Endothelial cell of umbilical vein (primary cell): ENCODE measurements at regions of chr2 and their contacts with region 1.

Region 1: DNA sequence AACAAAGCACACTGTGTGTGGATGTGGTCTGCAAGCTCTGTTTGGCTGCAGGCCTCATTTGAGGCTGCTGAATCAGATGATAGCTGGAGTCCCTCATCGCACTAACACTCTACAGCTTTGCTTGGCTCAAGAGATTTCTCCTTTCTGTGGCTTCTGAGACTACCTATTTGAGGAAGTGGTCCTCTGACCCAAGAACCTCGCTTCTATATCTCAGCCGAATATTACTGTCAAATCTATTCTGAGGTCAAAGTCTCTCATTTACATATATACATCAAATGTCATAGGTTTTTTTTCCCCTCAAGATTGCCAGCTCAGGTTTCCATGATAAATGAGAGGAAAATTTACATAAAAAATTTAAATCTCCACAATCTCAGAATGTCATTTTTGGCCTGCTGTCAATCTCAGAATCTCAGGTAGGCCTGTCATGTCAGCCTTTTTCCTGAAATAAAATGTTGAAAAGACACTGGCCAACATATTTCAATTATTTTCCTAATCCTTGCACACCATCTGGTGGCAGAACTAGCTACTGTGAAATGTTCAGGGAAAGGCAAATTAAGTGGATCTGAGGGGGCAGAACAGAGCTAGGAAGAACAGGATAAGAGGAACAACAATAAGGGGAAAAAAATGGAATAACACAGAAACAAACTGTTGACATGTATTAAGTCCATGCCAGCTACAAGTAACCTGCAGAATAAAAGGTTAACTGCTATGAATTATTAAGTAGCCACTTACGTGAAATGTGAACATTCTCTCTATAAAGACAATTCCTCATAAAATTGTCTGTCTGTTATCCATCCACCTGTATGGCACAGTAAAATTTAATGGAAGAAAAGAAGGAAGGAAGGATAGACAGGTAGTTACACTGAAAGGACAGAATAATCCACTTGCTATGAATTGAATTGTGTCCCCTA is 39.3 kb downstream of the AP1S3 start:
- DNase-seq: peak; percentile 73
- H3K4me3 ChIP-seq: no peak overlapping the region
- H3K27ac ChIP-seq: no peak overlapping the region
- H3K4me1 ChIP-seq: peaks cover 4% of the 10 kb centered on the region
- H3K27me3 ChIP-seq: no peaks in the 10 kb centered on the region
- CTCF ChIP-seq: peak; percentile 46 to 47
- POLR2A ChIP-seq: no peak

Region 2: DNA sequence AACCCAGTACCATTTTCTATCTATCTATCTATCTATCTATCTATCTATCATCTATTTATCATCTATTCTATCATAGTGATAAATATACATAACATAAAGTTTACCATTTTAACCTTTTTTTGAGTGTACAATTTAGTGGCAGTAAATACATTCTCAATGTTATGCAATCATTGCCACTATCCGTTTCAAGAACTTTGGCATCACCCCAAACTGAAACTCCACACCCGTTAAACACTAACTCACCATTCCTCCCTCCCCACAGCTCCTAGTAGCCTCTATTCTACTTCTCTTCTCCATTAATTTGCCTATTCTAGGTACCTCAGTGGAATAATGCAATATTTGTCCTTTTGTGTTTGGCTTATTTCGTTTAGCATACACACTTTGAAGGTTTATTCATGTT is 828.6 kb before region 1 on chr2:
- CTCF ChIA-PET with region 1: interaction called, 58 read pairs
- POLR2A ChIA-PET with region 1: no interaction called
- dilution Hi-C with region 1: no loop called
- intact Hi-C with region 1: loop called (anchors 1 kb)
- DNase-seq: no peak
- H3K4me3 ChIP-seq: no peak overlapping the region
- H3K27ac ChIP-seq: no peak overlapping the region
- H3K4me1 ChIP-seq: no peaks in the 10 kb centered on the region
- H3K27me3 ChIP-seq: peaks cover 0 to 10% of the 10 kb centered on the region in 2 experiments
- CTCF ChIP-seq: no peak
- POLR2A ChIP-seq: no peak

Region 3: DNA sequence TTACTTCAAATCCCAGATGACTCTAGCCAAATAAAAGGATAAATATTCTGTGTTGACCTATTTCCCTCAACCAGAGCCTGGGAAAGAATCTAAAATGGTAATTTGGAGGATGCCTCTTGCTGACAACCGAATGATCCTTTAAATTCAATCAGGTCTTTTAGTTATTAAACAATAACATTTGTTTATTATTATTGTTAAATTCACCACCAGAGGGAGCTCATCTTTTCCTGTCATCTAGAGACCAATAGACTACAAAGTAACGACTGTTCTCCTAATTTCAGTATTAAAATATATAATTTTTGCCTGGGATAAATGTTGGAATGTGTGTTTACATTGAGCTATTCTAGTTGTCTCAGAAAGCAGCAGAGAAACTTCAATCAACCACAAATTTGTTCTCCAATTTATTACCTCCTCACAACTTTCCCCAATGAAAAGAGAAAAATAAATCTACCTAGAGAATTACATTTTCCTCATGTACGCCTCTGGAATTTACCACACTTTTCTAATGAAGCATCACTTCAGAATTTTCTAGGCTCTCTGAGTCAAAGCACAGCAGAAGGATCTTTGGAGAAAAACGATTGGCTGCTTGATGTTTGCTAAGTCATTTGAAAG is 338.6 kb before region 1 on chr2:
- CTCF ChIA-PET with region 1: interaction called, 70 read pairs
- POLR2A ChIA-PET with region 1: no interaction called
- dilution Hi-C with region 1: no loop called
- intact Hi-C with region 1: loop called (anchors 1 kb)
- DNase-seq: peak; percentile 26
- H3K4me3 ChIP-seq: no peak overlapping the region
- H3K27ac ChIP-seq: no peak overlapping the region
- H3K4me1 ChIP-seq: peaks cover 6% of the 10 kb centered on the region
- H3K27me3 ChIP-seq: no peaks in the 10 kb centered on the region
- CTCF ChIP-seq: peak; percentile 12 to 17
- POLR2A ChIP-seq: no peak

Region 4: DNA sequence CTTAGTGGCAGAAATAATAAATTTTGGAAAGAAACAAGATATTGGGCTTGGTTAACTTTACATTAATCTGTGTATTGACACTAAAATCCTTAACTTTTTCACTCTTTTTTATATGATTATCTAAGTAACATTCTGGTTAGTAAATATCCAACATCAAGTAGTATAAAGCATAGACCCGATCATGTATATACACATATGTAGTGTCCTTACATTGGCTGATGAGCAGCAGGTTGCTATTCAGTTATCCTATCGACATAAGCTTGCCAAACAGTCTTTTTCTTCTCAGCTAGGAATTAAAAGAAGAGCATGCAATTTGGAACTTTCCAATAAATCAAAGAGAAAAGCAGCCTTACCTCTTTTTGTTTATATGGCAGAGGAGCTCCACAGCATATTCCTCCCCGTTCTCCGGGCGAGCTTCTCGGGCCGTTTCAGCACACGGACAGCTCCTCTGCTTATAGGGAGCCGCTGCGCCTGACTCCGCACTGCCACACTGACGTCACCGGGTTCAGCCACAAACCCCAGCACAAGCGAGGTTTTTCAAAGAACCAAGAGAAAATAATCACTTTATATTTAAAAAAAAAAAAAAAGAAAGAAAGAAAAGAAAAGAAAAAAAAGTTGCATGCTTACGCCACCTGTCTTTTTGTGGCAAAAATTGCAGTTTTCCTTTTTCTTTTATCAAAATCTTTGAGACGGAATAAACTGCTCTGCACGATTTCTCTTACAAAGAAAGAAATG is 196.0 kb before region 1 on chr2 and contains the start of gene SCG2:
- CTCF ChIA-PET with region 1: interaction called, 16 read pairs
- POLR2A ChIA-PET with region 1: no interaction called
- dilution Hi-C with region 1: no loop called
- intact Hi-C with region 1: no loop called
- DNase-seq: peak; percentile 76
- H3K4me3 ChIP-seq: no peak within 1 kb of the TSS
- H3K27ac ChIP-seq: no peak within 1 kb of the TSS
- H3K4me1 ChIP-seq: no peaks in the 10 kb centered on the region
- H3K27me3 ChIP-seq: peaks cover 10 to 13% of the 10 kb centered on the region in 2 experiments
- CTCF ChIP-seq: no peak
- POLR2A ChIP-seq: no peak
- total RNA-seq, gene SCG2: not detected in 2 replicates

Region 5: DNA sequence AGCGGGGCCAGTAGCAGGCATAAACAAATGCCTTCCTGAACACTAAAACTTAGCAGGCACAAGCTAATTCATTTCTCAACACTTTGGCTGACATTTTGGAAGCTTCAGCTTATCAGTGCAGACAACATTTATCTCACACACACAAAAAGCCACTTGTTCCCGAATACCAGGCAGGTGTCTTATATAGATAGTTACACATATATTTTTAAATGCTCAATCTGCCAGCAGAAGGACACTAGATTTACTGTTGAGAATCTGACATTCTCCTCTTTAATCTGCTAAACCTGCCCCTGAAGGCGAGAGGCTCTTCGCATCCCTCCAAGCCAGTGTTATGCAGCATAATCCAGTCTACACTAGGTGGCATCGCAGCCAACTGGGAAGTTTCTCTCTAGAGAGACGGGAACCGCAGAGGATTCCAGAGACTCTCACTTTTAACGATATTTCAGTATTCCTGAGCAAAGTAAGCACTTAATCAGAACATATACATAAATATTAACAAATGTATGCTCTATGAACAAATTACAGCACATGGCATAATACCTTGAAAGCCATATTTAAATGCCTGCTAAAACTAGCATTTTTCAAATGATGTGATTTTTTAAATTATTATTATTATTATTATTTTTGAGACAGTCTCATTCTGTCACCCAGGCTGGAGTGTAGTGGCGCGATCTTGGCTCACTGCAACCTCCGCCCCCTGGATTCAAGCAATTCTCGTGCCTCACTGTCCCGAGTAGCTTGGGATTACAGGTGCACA is 105.7 kb before region 1 on chr2:
- CTCF ChIA-PET with region 1: interaction called, 176 read pairs
- POLR2A ChIA-PET with region 1: no interaction called
- dilution Hi-C with region 1: no loop called
- intact Hi-C with region 1: loop called (anchors 1 kb)
- DNase-seq: peak; percentile 69
- H3K4me3 ChIP-seq: no peak overlapping the region
- H3K27ac ChIP-seq: no peak overlapping the region
- H3K4me1 ChIP-seq: peaks cover 13% of the 10 kb centered on the region
- H3K27me3 ChIP-seq: no peaks in the 10 kb centered on the region
- CTCF ChIP-seq: peak; percentile 64 to 82
- POLR2A ChIP-seq: no peak

Region 6: DNA sequence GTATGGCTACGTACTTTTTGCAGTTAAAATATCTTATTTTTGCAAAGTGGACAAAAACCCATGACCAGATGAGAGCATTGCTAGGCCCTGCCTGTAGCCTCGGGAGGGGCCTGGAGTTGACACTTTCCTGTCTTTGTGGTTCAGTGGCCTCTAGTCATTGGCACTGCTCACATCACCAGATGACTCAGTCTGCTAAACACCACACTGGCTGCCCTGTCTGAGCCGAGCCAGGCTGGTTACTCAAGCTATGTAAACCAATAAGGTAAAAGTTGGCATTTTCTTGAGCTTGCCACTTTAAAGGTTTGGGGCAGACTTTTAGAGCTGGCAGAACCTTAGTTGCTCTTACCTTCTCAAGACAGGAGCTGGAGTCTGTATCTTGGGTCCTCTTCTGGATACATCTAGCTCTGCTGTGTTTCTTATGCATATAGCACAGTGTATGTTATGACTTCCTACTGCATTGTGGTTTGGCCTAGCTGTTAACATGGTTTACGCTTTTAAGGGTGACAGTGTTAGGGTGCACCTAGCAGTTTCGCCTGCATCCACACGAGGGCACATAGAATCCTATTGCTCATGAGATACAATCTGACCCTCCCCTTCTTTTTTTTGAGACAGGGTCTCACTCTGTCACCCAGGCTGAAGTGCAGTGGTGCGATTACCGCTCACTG is 37.1 kb before region 1 on chr2:
- CTCF ChIA-PET with region 1: interaction called, 12 read pairs
- POLR2A ChIA-PET with region 1: no interaction called
- dilution Hi-C with region 1: no loop called
- intact Hi-C with region 1: no loop called
- DNase-seq: peak; percentile 84
- H3K4me3 ChIP-seq: no peak overlapping the region
- H3K27ac ChIP-seq: peak overlapping the region; percentile 66
- H3K4me1 ChIP-seq: peaks cover 39% of the 10 kb centered on the region
- H3K27me3 ChIP-seq: no peaks in the 10 kb centered on the region
- CTCF ChIP-seq: no peak
- POLR2A ChIP-seq: no peak

Region 7: GRCh38 chr2:223860809-223861738 is 63.0 kb after region 1 on chr2:
- CTCF ChIA-PET with region 1: interaction called, 26 read pairs
- POLR2A ChIA-PET with region 1: no interaction called
- dilution Hi-C with region 1: no loop called
- intact Hi-C with region 1: no loop called
- DNase-seq: no peak
- H3K4me3 ChIP-seq: no peak overlapping the region
- H3K27ac ChIP-seq: no peak overlapping the region
- H3K4me1 ChIP-seq: no peaks in the 10 kb centered on the region
- H3K27me3 ChIP-seq: no peaks in the 10 kb centered on the region
- CTCF ChIP-seq: no peak
- POLR2A ChIP-seq: no peak

Region 8: DNA sequence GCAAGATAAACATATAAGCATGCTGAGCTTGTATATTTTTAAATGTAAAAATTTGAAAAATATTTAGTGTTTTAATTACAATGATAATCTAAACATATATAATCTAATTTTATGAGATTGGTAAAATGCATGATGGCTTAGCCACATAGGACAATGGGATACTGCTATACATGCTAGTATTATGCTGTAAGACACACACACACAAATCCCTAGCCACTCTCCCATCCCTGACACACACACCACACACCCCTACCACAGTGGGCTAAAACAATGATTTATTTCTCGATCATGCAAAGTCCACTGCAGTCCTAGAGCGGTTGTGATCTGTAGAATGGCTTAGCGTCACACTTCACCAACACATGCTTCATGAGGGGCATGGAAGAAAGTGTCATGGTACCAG is 75.6 kb after region 1 on chr2:
- CTCF ChIA-PET with region 1: no interaction called
- POLR2A ChIA-PET with region 1: no interaction called
- dilution Hi-C with region 1: no loop called
- intact Hi-C with region 1: no loop called
- DNase-seq: no peak
- H3K4me3 ChIP-seq: no peak overlapping the region
- H3K27ac ChIP-seq: no peak overlapping the region
- H3K4me1 ChIP-seq: no peaks in the 10 kb centered on the region
- H3K27me3 ChIP-seq: no peaks in the 10 kb centered on the region
- CTCF ChIP-seq: no peak
- POLR2A ChIP-seq: no peak